Dendritic cell treated with granulocyte-macrophage colony-stimulating factor and Interleukin-4, amounts not matched to agents 40 ng/mL and 50 ng/mL, for 4 days (primary cell): ENCODE measurements at regions of chr10 and their contacts with region 1.

Region 1: GRCh38 chr10:124791378-124792348 is at the start of gene EEF1AKMT2:
- H3K4me3 Mint-ChIP-seq: peak within 1 kb of the TSS; percentile 92
- H3K27ac Mint-ChIP-seq: peak within 1 kb of the TSS; percentile 98
- H3K4me1 Mint-ChIP-seq: peaks cover 17% of the 10 kb centered on the region
- H3K27me3 Mint-ChIP-seq: peaks cover 3% of the 10 kb centered on the region

Region 2: DNA sequence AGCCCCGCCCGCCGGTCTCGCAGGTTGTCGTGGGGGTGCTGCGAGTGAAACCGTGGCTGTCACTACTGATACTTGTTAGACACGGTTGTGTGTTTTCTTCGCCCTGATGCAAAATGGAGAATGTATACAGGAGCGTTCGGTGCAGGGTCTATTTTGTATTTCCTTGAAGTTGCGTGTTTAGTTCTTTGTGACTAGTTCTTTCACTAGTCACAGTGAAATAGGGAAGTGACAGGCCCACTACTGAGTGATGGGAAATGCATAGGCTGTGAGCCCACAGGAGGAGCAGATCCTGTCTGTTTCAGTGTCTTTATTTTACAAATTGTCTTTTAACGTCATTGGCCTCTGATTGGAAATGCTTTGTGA is 10.6 kb after region 1 on chr10:
- intact Hi-C with region 1: loop called (anchors 1 kb)
- H3K4me3 Mint-ChIP-seq: peak overlapping the region; percentile 82
- H3K27ac Mint-ChIP-seq: peak overlapping the region; percentile 93
- H3K4me1 Mint-ChIP-seq: peaks cover 4% of the 10 kb centered on the region
- H3K27me3 Mint-ChIP-seq: peaks cover 2% of the 10 kb centered on the region